ENCODE measurements at regions of chr10 and their contacts with region 1.

Region 1: GRCh38 chr10:18238870-18239485 is 98.8 kb downstream of the CACNB2 start:
- DNase-seq: no peak
- H3K4me3 ChIP-seq: no peak overlapping the region
- H3K27ac ChIP-seq: no peak overlapping the region
- H3K4me1 ChIP-seq: peaks cover 0 to 21% of the 10 kb centered on the region in 2 donors
- H3K27me3 ChIP-seq: no peaks in the 10 kb centered on the region
- CTCF ChIP-seq: peak; percentile 19 to 69 (median 64)

Region 2: GRCh38 chr10:17617031-17617911 is 621.7 kb before region 1 on chr10 and contains the start of gene HACD1:
- intact Hi-C with region 1: loop called (anchors 10 kb)
- DNase-seq: peak in 1 of 2 donors; percentile 86
- H3K4me3 ChIP-seq: peak within 1 kb of the TSS; percentile 73 to 75
- H3K27ac ChIP-seq: peak within 1 kb of the TSS; percentile 90 to 95
- H3K4me1 ChIP-seq: peaks cover 0 to 15% of the 10 kb centered on the region in 2 donors
- H3K27me3 ChIP-seq: no peaks in the 10 kb centered on the region
- CTCF ChIP-seq: peak in 1 of 3 experiments; percentile 29
- total RNA-seq, gene HACD1: 41.6 TPM

Region 3: DNA sequence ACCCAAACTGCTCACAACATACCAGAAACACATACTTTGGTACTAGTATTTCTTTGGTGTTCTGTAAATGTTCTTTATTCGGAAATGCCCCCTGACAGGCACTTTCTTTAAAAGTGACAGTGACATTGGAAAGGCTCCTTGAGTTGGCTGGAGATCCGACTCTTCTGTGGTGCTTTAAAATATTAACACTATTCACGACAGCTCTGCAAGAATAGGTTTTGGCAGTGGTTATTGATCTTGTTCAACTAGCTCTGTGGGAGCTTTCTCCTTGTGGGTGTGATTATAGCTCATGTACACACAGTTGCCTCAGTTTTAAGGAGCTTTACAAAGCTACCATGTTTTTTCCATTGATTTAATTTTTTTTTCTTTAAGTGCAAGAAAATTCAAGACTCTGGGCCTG is 317.6 kb before region 1 on chr10:
- intact Hi-C with region 1: no loop called
- DNase-seq: no peak
- H3K4me3 ChIP-seq: no peak overlapping the region
- H3K27ac ChIP-seq: no peak overlapping the region
- H3K4me1 ChIP-seq: peaks cover 2 to 10% of the 10 kb centered on the region in 2 donors
- H3K27me3 ChIP-seq: no peaks in the 10 kb centered on the region
- CTCF ChIP-seq: no peak

Region 4: GRCh38 chr10:18122753-18123152 is 116.2 kb before region 1 on chr10:
- intact Hi-C with region 1: no loop called
- DNase-seq: no peak
- H3K4me3 ChIP-seq: no peak overlapping the region
- H3K27ac ChIP-seq: no peak overlapping the region
- H3K4me1 ChIP-seq: no peaks in the 10 kb centered on the region
- H3K27me3 ChIP-seq: no peaks in the 10 kb centered on the region
- CTCF ChIP-seq: no peak

Measured in ascending aorta (tissue), 2 donors.